Panc1 (cell line): ENCODE measurements at regions of chr2 and their contacts with region 1.

Region 1: DNA sequence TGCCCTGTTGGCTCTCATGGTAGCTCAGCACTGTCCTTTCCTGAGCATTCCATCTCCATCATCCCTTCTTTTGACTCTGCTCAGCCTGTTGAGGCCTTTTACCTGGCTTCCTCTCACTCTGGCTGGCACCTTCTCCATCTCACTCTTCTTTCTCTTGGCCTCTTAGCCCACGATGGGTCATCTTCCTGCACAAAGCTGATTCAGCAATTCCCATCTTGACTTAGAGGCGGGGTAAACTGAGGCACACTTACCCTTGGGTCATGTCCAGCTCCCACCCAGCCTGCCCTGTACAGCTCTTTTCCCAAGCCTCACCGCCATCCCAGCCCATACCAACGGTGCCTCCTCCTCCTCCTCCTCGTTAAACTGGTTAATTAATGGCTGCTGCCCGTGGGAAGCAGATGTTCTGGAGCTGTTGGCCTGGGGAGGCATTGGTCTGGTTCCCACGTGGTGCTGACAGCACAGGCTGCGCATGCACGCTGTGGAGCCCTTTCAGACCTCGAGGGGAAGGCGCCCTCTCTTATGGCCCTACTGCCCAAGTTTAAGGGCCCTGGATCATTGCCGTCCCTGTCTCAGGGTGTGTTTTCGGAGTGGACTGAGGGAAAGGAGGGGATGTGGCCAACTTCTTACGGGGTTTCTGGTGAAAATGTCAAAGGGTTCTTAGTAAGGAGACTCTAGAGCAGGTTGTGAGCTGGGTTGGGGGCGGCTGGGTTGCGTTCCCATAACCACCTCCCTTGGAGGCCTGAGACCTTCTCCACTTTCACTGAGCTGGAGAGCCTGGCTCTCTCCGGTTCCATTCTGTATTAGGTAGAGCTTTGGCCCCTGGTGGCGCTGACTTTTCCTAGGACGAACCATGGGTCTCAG is 10.9 kb downstream of the WNT10A start:
- DNase-seq: no peak
- ATAC-seq: no peak
- H3K4me3 ChIP-seq: no peak overlapping the region
- H3K27ac ChIP-seq: peak overlapping the region; percentile 72; the same call in 1 of the 2 replicates
- H3K4me1 ChIP-seq: peaks cover 40% of the 10 kb centered on the region
- H3K27me3 ChIP-seq: no peaks in the 10 kb centered on the region
- CTCF ChIP-seq: no peak

Region 2: GRCh38 chr2:218788529-218789255 is 102.8 kb before region 1 on chr2:
- CTCF ChIA-PET with region 1: no interaction called
- POLR2A ChIA-PET with region 1: no interaction called
- in situ Hi-C with region 1: no loop called
- intact Hi-C with region 1: no loop called
- DNase-seq: no peak
- ATAC-seq: no peak
- H3K4me3 ChIP-seq: no peak overlapping the region
- H3K27ac ChIP-seq: no peak overlapping the region
- H3K4me1 ChIP-seq: no peaks in the 10 kb centered on the region
- H3K27me3 ChIP-seq: no peaks in the 10 kb centered on the region
- CTCF ChIP-seq: no peak

Region 3: GRCh38 chr2:218876562-218877219 is 14.8 kb before region 1 on chr2:
- CTCF ChIA-PET with region 1: interaction called, 102 read pairs
- POLR2A ChIA-PET with region 1: interaction called, 10 read pairs
- in situ Hi-C with region 1: no loop called
- intact Hi-C with region 1: no loop called
- DNase-seq: peak; percentile 70
- ATAC-seq: peak; percentile 66
- H3K4me3 ChIP-seq: no peak overlapping the region
- H3K27ac ChIP-seq: no peak overlapping the region
- H3K4me1 ChIP-seq: peaks cover 24% of the 10 kb centered on the region
- H3K27me3 ChIP-seq: no peaks in the 10 kb centered on the region
- CTCF ChIP-seq: peak; percentile 96